ENCODE measurements at regions of chr2 and their contacts with region 1.

Region 1: DNA sequence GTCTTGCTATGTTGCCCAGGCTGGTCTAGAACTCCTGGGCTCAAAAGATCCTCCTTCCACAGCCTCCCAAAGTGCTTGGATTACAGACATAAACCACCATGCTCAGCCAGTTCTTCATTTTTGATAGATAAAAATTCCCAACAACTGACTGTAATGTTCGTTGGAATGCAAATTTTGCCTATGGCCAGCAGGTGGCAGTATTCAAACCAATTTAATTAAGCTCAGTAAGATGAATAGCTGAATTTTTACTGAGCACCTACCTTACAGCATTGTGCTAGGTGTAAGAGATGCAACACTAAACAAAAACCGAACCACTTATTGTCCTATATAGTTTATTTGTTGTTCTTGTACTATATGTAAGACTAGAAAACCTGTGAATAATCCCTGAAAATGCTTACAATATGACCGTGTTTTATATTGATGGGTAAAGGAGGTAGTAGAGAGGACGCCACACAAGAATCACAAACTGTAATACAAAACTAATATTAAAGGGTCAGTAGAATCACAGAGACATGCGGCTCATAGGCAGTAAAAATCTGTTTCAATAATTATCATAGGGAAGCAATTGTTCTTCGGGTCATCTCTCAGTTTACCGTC is 8.2 kb upstream of the TMEM182 start:
- DNase-seq: no peak
- H3K4me3 Mint-ChIP-seq: no peak overlapping the region
- H3K27ac Mint-ChIP-seq: no peak overlapping the region
- H3K4me1 Mint-ChIP-seq: no peaks in the 10 kb centered on the region
- H3K27me3 Mint-ChIP-seq: peaks cover 2% of the 10 kb centered on the region

Region 2: GRCh38 chr2:102606363-102606762 is 147.3 kb before region 1 on chr2:
- CTCF ChIA-PET with region 1: no interaction called
- POLR2A ChIA-PET with region 1: no interaction called
- DNase-seq: no peak
- H3K4me3 Mint-ChIP-seq: no peak overlapping the region
- H3K27ac Mint-ChIP-seq: no peak overlapping the region
- H3K4me1 Mint-ChIP-seq: no peaks in the 10 kb centered on the region
- H3K27me3 Mint-ChIP-seq: peaks cover 13% of the 10 kb centered on the region

Region 3: GRCh38 chr2:102703748-102704147 is 49.9 kb before region 1 on chr2:
- CTCF ChIA-PET with region 1: no interaction called
- POLR2A ChIA-PET with region 1: no interaction called
- DNase-seq: no peak
- H3K4me3 Mint-ChIP-seq: no peak overlapping the region
- H3K27ac Mint-ChIP-seq: no peak overlapping the region
- H3K4me1 Mint-ChIP-seq: no peaks in the 10 kb centered on the region
- H3K27me3 Mint-ChIP-seq: peaks cover 16% of the 10 kb centered on the region

Region 4: GRCh38 chr2:102736410-102737409 is 17.0 kb before region 1 on chr2:
- CTCF ChIA-PET with region 1: interaction called, 66 read pairs
- POLR2A ChIA-PET with region 1: interaction called, 5 read pairs
- DNase-seq: peak; percentile 87
- H3K4me3 Mint-ChIP-seq: peak overlapping the region; percentile 92
- H3K27ac Mint-ChIP-seq: peak overlapping the region; percentile 75
- H3K4me1 Mint-ChIP-seq: peaks cover 29% of the 10 kb centered on the region
- H3K27me3 Mint-ChIP-seq: no peaks in the 10 kb centered on the region

Region 5: GRCh38 chr2:102806250-102806837 is 52.7 kb after region 1 on chr2:
- CTCF ChIA-PET with region 1: interaction called, 110 read pairs
- POLR2A ChIA-PET with region 1: interaction called, 4 read pairs
- DNase-seq: peak; percentile 52
- H3K4me3 Mint-ChIP-seq: no peak overlapping the region
- H3K27ac Mint-ChIP-seq: no peak overlapping the region
- H3K4me1 Mint-ChIP-seq: peaks cover 22% of the 10 kb centered on the region
- H3K27me3 Mint-ChIP-seq: no peaks in the 10 kb centered on the region